GM10248 (cell line): ENCODE measurements at regions of chr12 and their contacts with region 1.

Region 1: GRCh38 chr12:113221181-113221997 is at the start of gene TPCN1:
- DNase-seq: peak; percentile 97
- CTCF ChIP-seq: no peak

Region 2: DNA sequence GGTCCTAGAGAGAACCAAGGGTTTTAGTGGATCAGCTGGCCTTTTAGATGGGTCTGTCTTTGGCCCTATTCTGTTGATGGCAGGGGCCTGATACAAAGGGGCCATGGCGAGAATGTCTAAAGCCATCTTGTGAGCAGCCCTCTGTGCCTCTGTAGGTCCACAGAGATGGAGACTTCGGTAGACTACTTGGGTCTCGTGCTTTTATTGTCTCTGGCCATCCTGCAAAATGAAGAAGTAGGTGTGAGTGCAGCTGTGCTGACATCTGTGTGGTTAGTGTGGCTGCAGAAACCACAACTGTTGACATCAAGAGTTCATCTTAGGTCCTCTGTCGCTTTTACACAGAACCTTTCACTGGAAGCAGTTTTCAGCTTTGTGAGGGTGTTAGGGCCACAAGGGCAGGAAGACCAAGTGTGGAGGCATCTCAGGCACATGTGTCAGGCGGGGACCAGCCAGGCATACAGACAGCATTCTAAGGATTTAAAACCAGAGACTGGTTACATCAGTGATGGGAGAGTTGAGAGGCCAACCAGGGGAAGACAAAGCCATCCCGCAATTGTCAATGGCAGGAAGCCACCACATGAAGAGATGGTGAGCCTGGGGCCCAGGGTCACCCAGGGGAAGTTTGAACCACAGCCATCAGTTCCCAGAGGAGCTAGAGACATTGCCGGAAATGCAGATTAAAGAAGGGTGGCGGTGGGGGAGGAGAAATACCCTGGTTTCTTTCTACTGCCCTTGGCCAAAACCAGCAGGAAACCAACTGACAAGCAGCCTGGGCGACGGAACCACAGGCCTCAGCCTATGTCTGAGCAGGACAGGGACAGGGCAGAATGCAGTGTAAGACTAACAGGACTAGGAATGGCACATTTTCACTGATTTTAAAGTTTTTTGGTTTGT is 13.1 kb before region 1 on chr12:
- CTCF ChIA-PET with region 1: interaction called, 9 read pairs
- POLR2A ChIA-PET with region 1: interaction called, 25 read pairs
- DNase-seq: peak; percentile 84
- CTCF ChIP-seq: no peak